Breast epithelium (tissue), 4 donors: ENCODE measurements at regions of chr16 and their contacts with region 1.

Region 1: GRCh38 chr16:82265809-82266208 is 95.8 kb upstream of the MPHOSPH6 start:
- DNase-seq: no peak
- H3K4me3 ChIP-seq: no peak overlapping the region
- H3K27ac ChIP-seq: no peak overlapping the region
- H3K4me1 ChIP-seq: no peaks in the 10 kb centered on the region
- H3K27me3 ChIP-seq: no peaks in the 10 kb centered on the region
- CTCF ChIP-seq: no peak
- POLR2A ChIP-seq: no peak

Region 2: DNA sequence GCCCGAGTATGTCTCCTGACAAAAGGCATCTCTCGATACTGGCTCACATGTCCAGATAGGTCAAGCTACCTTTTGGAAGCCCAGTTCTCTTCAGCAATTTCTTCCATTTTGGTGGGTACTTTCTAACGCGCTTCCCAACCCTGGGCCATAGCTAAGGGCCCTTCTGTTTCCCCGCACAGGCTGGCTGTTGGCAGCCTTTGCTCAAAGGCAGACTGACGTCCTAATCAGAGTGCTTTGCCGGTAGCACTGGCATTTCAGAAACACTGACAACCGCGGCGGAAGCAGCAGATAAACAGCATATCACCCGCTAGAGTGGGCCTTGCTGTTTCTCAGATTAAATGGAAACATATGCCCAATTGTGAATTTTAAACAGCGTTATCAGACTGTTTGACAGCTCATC is 46.5 kb before region 1 on chr16:
- intact Hi-C with region 1: loop called (anchors 2 kb)
- DNase-seq: no peak
- H3K4me3 ChIP-seq: no peak overlapping the region
- H3K27ac ChIP-seq: no peak overlapping the region
- H3K4me1 ChIP-seq: no peaks in the 10 kb centered on the region
- H3K27me3 ChIP-seq: no peaks in the 10 kb centered on the region
- CTCF ChIP-seq: no peak
- POLR2A ChIP-seq: no peak